ENCODE measurements at regions of chr1 and their contacts with region 1.

Region 1: DNA sequence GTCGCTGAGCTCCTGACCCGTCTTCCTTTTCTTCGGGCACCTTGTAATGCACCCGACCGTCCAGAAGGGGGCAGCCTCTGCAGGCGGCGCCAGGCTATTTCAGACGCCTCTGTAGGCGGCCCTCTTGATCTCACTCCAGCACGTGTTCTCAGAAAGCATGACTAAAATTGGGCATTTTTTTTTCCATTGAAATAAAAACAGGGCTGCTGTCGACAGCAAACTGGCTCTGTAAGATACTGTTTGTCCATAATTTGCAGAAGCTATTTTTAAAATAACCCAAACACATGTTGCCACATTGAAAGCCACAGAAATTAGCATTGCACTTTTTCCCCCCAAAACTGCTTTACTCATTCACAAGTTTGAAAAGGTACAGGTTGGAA is 78.0 kb downstream of the STUM start:
- DNase-seq: peak; percentile 85
- H3K4me3 Mint-ChIP-seq: no peak overlapping the region
- H3K27ac Mint-ChIP-seq: peak overlapping the region; percentile 36
- H3K4me1 Mint-ChIP-seq: peaks cover 22% of the 10 kb centered on the region
- H3K27me3 Mint-ChIP-seq: no peaks in the 10 kb centered on the region
- CTCF ChIP-seq: peak; percentile 99

Region 2: GRCh38 chr1:226603022-226603857 is 23.3 kb before region 1 on chr1:
- CTCF ChIA-PET with region 1: interaction called, 16 read pairs
- POLR2A ChIA-PET with region 1: interaction called, 21 read pairs
- intact Hi-C with region 1: no loop called
- DNase-seq: peak; percentile 91
- H3K4me3 Mint-ChIP-seq: peak overlapping the region; percentile 71
- H3K27ac Mint-ChIP-seq: peak overlapping the region; percentile 97
- H3K4me1 Mint-ChIP-seq: peaks cover 42% of the 10 kb centered on the region
- H3K27me3 Mint-ChIP-seq: peaks cover 8% of the 10 kb centered on the region
- CTCF ChIP-seq: no peak

Region 3: DNA sequence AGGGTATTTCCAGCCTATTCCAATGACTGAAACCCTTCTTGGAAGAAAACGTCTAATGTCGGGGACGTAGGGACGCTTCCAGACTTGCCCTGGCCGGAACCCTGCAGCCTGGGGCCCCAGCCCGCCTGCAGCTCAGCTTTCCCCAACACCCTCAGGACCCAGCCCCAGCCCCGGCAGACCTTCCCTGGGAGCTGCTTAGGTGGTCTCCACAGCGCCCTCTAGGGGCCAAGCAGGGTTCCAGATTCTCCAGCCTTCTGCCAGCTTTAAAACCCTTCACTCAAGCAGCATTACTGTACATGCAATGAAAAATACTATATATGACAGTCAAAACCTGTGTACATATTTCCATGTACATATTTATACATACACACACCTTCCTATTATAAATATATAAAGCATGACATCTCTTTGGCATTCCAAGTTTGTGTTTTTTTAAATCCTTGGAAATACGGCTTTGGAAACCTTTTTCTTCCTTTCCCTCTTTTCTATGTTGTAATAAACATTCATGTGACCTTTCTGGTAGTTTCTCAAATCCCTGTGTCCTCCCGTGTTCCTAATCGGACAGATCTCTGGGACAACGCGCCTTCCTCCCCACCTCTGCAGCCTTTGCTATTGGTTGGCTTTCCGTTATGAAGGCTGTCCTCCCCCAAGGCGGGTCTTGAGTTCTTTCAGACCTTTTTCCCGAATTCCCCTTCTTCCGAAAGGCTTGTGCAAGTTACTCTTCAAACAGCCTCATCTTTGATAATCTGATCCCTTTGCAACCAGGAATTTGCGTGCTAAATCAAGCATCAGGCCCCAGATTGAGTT is 17.7 kb before region 1 on chr1:
- CTCF ChIA-PET with region 1: interaction called, 16 read pairs
- POLR2A ChIA-PET with region 1: interaction called, 6 read pairs
- intact Hi-C with region 1: no loop called
- DNase-seq: peak; percentile 83
- H3K4me3 Mint-ChIP-seq: no peak overlapping the region
- H3K27ac Mint-ChIP-seq: no peak overlapping the region
- H3K4me1 Mint-ChIP-seq: peaks cover 6% of the 10 kb centered on the region
- H3K27me3 Mint-ChIP-seq: no peaks in the 10 kb centered on the region
- CTCF ChIP-seq: peak; percentile 99

Region 4: GRCh38 chr1:226642876-226643576 is 16.5 kb after region 1 on chr1:
- CTCF ChIA-PET with region 1: interaction called, 11 read pairs
- POLR2A ChIA-PET with region 1: no interaction called
- intact Hi-C with region 1: no loop called
- DNase-seq: peak; percentile 95
- H3K4me3 Mint-ChIP-seq: no peak overlapping the region
- H3K27ac Mint-ChIP-seq: peak overlapping the region; percentile 43
- H3K4me1 Mint-ChIP-seq: peaks cover 9% of the 10 kb centered on the region
- H3K27me3 Mint-ChIP-seq: no peaks in the 10 kb centered on the region
- CTCF ChIP-seq: no peak

Measured in MCF 10A (cell line).